ENCODE measurements at regions of chr17 and their contacts with region 1.

Region 1: GRCh38 chr17:5413682-5414081 is 5.8 kb downstream of the NUP88 start:
- DNase-seq: no peak
- ATAC-seq: no peak

Region 2: GRCh38 chr17:6323582-6324356 is 910.1 kb after region 1 on chr17:
- intact Hi-C with region 1: loop called (anchors 5 kb)
- DNase-seq: no peak
- ATAC-seq: no peak